Panc1 (cell line): ENCODE measurements at regions of chr3 and their contacts with region 1.

Region 1: GRCh38 chr3:196336319-196337145 is 1.7 kb downstream of the TM4SF19 start:
- DNase-seq: no peak
- ATAC-seq: no peak
- H3K4me3 ChIP-seq: no peak overlapping the region
- H3K27ac ChIP-seq: no peak overlapping the region
- H3K4me1 ChIP-seq: no peaks in the 10 kb centered on the region
- H3K27me3 ChIP-seq: no peaks in the 10 kb centered on the region
- CTCF ChIP-seq: no peak

Region 2: GRCh38 chr3:195172039-195172684 is 1164.4 kb before region 1 on chr3:
- CTCF ChIA-PET with region 1: no interaction called
- POLR2A ChIA-PET with region 1: no interaction called
- in situ Hi-C with region 1: no loop called
- intact Hi-C with region 1: no loop called
- DNase-seq: no peak
- ATAC-seq: no peak
- H3K4me3 ChIP-seq: no peak overlapping the region
- H3K27ac ChIP-seq: no peak overlapping the region
- H3K4me1 ChIP-seq: no peaks in the 10 kb centered on the region
- H3K27me3 ChIP-seq: no peaks in the 10 kb centered on the region
- CTCF ChIP-seq: no peak

Region 3: GRCh38 chr3:196251918-196252317 is 84.6 kb before region 1 on chr3:
- CTCF ChIA-PET with region 1: interaction called, 10 read pairs
- POLR2A ChIA-PET with region 1: no interaction called
- in situ Hi-C with region 1: no loop called
- intact Hi-C with region 1: no loop called
- DNase-seq: no peak
- ATAC-seq: no peak
- H3K4me3 ChIP-seq: no peak overlapping the region
- H3K27ac ChIP-seq: no peak overlapping the region
- H3K4me1 ChIP-seq: no peaks in the 10 kb centered on the region
- H3K27me3 ChIP-seq: no peaks in the 10 kb centered on the region
- CTCF ChIP-seq: no peak

Region 4: GRCh38 chr3:196292291-196292923 is 44.1 kb before region 1 on chr3:
- CTCF ChIA-PET with region 1: interaction called, 12 read pairs
- POLR2A ChIA-PET with region 1: no interaction called
- in situ Hi-C with region 1: no loop called
- intact Hi-C with region 1: no loop called
- DNase-seq: no peak
- ATAC-seq: no peak
- H3K4me3 ChIP-seq: no peak overlapping the region
- H3K27ac ChIP-seq: no peak overlapping the region
- H3K4me1 ChIP-seq: no peaks in the 10 kb centered on the region
- H3K27me3 ChIP-seq: no peaks in the 10 kb centered on the region
- CTCF ChIP-seq: no peak

Region 5: GRCh38 chr3:196350067-196350466 is 13.5 kb after region 1 on chr3:
- CTCF ChIA-PET with region 1: no interaction called
- POLR2A ChIA-PET with region 1: interaction called, 12 read pairs
- in situ Hi-C with region 1: no loop called
- intact Hi-C with region 1: no loop called
- DNase-seq: no peak
- ATAC-seq: no peak
- H3K4me3 ChIP-seq: no peak overlapping the region
- H3K27ac ChIP-seq: no peak overlapping the region
- H3K4me1 ChIP-seq: 0 out of 2 replicates have a peak, but pooled peaks cover 2% of the 10 kb centered on the region
- H3K27me3 ChIP-seq: no peaks in the 10 kb centered on the region
- CTCF ChIP-seq: no peak

Region 6: DNA sequence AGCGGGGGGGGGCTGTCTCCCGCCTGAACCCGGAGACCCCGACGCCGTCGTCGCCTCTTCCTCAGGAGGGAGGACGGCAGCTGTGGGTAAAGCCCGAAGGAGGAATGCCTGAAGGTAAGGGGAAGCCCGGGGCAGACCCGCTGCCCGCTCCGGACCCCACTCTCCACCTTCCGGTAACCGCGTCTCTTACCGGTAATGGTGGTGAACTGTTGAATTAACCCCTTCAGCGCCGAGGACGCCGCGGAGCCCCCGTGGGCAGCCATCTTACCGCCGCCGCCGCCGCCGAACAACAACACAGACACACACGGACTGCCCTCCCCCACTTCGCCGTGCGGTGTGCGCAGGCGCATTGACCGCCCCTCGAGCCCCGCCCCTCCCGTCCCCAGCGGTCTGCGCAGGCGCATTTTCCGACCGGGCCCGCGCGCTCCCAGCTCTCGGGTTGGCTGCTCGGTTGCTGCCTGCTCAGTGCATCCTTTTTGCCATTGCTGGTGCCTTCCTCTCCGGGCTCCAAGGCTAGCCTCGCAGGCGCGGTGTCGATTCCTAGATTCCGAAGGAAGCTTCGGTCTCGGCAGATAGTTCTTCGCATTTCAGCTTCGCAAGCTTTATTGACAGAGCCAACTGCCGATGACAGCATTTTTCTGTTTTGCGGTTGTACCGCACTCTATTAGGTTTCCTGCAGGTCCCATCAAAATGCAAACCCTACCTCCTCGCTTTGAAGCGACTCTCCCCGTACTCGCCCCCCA is 95.8 kb after region 1 on chr3 and contains the start of gene UBXN7:
- CTCF ChIA-PET with region 1: no interaction called
- POLR2A ChIA-PET with region 1: interaction called, 13 read pairs
- in situ Hi-C with region 1: no loop called
- intact Hi-C with region 1: no loop called
- DNase-seq: peak; percentile 75
- ATAC-seq: peak; percentile 96
- H3K4me3 ChIP-seq: peak within 1 kb of the TSS; percentile 76 to 87
- H3K27ac ChIP-seq: peak within 1 kb of the TSS; percentile 91
- H3K4me1 ChIP-seq: peaks cover 7% of the 10 kb centered on the region; the same call in 1 of the 2 replicates
- H3K27me3 ChIP-seq: no peaks in the 10 kb centered on the region
- CTCF ChIP-seq: no peak
- total RNA-seq, gene UBXN7: 61.7 TPM